Activated CD4-positive, alpha-beta T cell treated with anti-CD3 and anti-CD28 coated beads for 36 hours (primary cell): ENCODE measurements at regions of chr3 and their contacts with region 1.

Region 1: GRCh38 chr3:71423151-71423906 is 160.2 kb downstream of the FOXP1 start:
- DNase-seq: no peak
- ATAC-seq: no peak
- H3K4me3 Mint-ChIP-seq: no peak overlapping the region
- H3K27ac Mint-ChIP-seq: peak overlapping the region; percentile 92
- H3K4me1 Mint-ChIP-seq: peaks cover 94% of the 10 kb centered on the region
- H3K27me3 Mint-ChIP-seq: no peaks in the 10 kb centered on the region

Region 2: GRCh38 chr3:71389911-71390573 is 33.3 kb before region 1 on chr3:
- CTCF ChIA-PET with region 1: no interaction called
- POLR2A ChIA-PET with region 1: no interaction called
- intact Hi-C with region 1: loop called in 1 of 2 experiments (anchors 1 kb)
- DNase-seq: peak; percentile 52
- ATAC-seq: peak; percentile 18
- H3K4me3 Mint-ChIP-seq: peak overlapping the region; percentile 52
- H3K27ac Mint-ChIP-seq: peak overlapping the region; percentile 69
- H3K4me1 Mint-ChIP-seq: peaks cover 78% of the 10 kb centered on the region
- H3K27me3 Mint-ChIP-seq: no peaks in the 10 kb centered on the region

Region 3: GRCh38 chr3:71444028-71444860 is 20.9 kb after region 1 on chr3:
- CTCF ChIA-PET with region 1: interaction called, 6 read pairs
- POLR2A ChIA-PET with region 1: interaction called, 3 read pairs
- intact Hi-C with region 1: loop called in 1 of 2 experiments (anchors 1 kb)
- DNase-seq: peak; percentile 76
- ATAC-seq: peak; percentile 59
- H3K4me3 Mint-ChIP-seq: peak overlapping the region; percentile 57
- H3K27ac Mint-ChIP-seq: peak overlapping the region; percentile 96
- H3K4me1 Mint-ChIP-seq: peaks cover 97% of the 10 kb centered on the region
- H3K27me3 Mint-ChIP-seq: no peaks in the 10 kb centered on the region

Region 4: DNA sequence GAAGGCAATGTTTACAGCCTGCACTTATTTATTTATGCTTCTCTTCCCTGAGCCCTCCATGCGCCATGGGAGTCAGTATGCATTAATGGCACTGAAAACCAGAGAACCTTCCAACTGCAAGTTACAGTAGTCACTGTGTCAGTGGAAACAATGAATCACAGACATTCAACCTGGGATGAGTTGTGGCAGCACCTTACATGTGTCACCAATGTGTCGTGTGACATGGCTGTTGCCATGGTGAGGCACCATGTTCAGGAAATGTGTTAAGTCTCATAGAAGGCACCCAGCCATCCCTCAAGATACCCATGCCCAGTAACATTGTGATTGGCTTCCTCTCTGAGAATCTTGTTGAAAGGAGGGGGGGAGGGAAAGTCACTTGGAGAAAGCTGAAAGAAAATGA is 55.2 kb after region 1 on chr3:
- CTCF ChIA-PET with region 1: interaction called, 3 read pairs
- POLR2A ChIA-PET with region 1: interaction called, 9 read pairs
- intact Hi-C with region 1: loop called in 1 of 2 experiments (anchors 1 kb)
- DNase-seq: peak; percentile 89
- ATAC-seq: peak; percentile 98
- H3K4me3 Mint-ChIP-seq: peak overlapping the region; percentile 19
- H3K27ac Mint-ChIP-seq: peak overlapping the region; percentile 93
- H3K4me1 Mint-ChIP-seq: peaks cover 78% of the 10 kb centered on the region
- H3K27me3 Mint-ChIP-seq: no peaks in the 10 kb centered on the region

Region 5: DNA sequence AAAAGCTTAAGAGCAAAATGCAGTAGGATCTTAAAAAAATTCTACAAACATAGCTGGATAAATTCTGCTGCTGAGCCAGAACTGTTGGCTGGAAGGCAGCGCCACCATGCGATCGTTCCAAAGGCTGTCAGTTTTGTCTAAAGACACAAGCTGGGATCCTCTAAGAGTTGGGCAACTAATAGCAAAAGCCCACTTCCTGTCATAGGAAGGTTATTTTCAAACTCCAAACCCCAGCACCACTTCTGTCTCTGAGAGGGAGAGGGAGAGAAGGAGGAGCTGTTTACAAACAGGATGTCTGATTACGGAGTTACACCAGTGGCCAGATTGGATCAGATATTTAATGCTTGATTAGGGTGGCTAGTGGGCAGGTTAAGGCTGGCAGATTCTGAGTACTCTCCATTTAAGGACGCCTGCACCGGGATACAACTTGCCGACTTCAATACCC is 257.9 kb after region 1 on chr3:
- CTCF ChIA-PET with region 1: no interaction called
- POLR2A ChIA-PET with region 1: no interaction called
- intact Hi-C with region 1: no loop called
- DNase-seq: peak; percentile 75
- ATAC-seq: peak; percentile 91
- H3K4me3 Mint-ChIP-seq: no peak overlapping the region
- H3K27ac Mint-ChIP-seq: no peak overlapping the region
- H3K4me1 Mint-ChIP-seq: peaks cover 13% of the 10 kb centered on the region
- H3K27me3 Mint-ChIP-seq: no peaks in the 10 kb centered on the region